Calu3 (cell line): ENCODE measurements at regions of chr3 and their contacts with region 1.

Region 1: GRCh38 chr3:22887664-22888291 is 315.3 kb upstream of the UBE2E2 start:
- DNase-seq: peak; percentile 34
- H3K4me3 Mint-ChIP-seq: no peak overlapping the region
- H3K27ac Mint-ChIP-seq: no peak overlapping the region
- H3K4me1 Mint-ChIP-seq: no peaks in the 10 kb centered on the region
- H3K27me3 Mint-ChIP-seq: peaks cover 20% of the 10 kb centered on the region
- CTCF ChIP-seq: peak; percentile 29

Region 2: GRCh38 chr3:22089284-22089683 is 798.5 kb before region 1 on chr3:
- CTCF ChIA-PET with region 1: no interaction called
- intact Hi-C with region 1: loop called (anchors 2 kb)
- DNase-seq: peak; percentile 49
- H3K4me3 Mint-ChIP-seq: no peak overlapping the region
- H3K27ac Mint-ChIP-seq: no peak overlapping the region
- H3K4me1 Mint-ChIP-seq: no peaks in the 10 kb centered on the region
- H3K27me3 Mint-ChIP-seq: no peaks in the 10 kb centered on the region
- CTCF ChIP-seq: peak; percentile 32

Region 3: DNA sequence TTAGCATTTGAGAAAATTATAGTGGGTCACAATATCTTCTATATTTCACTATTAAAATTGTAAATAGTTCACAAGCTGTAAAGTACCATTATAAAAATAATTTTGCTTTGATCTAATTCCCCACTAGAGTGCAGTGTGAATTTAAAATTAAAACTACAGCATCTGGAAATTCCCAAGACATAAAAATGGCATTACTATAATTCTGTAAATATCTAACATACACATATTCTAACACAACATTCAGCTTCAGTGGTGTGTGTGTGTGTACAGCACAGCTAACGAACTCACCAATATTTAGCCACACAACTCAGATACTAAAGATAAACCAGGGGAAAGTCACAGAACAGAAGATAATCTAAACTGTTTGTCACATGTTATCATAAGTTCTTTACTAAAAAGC is 711.8 kb before region 1 on chr3:
- CTCF ChIA-PET with region 1: no interaction called
- intact Hi-C with region 1: loop called (anchors 5 kb)
- DNase-seq: no peak
- H3K4me3 Mint-ChIP-seq: no peak overlapping the region
- H3K27ac Mint-ChIP-seq: no peak overlapping the region
- H3K4me1 Mint-ChIP-seq: no peaks in the 10 kb centered on the region
- H3K27me3 Mint-ChIP-seq: no peaks in the 10 kb centered on the region
- CTCF ChIP-seq: no peak

Region 4: DNA sequence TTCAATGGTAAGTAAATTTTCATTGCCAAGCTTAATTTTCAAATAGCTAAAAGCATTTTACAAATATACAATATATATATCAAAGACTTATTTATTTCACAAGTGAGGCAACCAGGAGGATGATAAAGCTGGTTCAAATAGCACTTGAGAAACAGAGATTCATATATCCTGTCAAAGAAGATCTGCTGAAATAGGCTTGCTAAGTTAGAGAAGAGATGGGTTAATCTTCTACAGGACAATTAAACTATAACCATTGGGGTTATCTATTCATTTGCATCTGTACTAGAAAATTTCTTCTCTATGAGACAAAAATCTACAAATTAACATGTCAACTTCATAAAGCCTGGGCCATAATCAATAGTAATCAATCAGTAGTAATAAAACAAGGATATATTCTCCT is 322.4 kb before region 1 on chr3:
- CTCF ChIA-PET with region 1: no interaction called
- intact Hi-C with region 1: loop called (anchors 1 kb)
- DNase-seq: no peak
- H3K4me3 Mint-ChIP-seq: no peak overlapping the region
- H3K27ac Mint-ChIP-seq: no peak overlapping the region
- H3K4me1 Mint-ChIP-seq: no peaks in the 10 kb centered on the region
- H3K27me3 Mint-ChIP-seq: no peaks in the 10 kb centered on the region
- CTCF ChIP-seq: no peak

Region 5: DNA sequence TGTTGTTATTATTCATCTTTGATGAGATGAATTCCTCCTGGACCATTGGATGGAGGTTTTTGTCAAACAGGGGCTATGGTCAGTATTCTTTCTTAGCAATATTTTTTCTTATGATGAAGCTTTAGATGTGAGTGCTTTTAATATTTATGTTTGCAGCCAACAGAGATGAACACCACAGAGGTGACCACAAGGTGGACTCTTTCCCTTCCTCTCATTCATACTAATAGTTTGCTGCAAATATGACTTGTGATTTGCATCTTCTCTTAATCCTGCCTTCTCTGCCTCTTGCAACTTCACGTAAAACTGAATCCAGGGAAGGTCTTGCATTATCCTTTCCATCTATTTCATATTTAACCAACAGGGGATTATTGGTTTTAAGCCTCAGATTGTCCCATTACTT is 157.8 kb before region 1 on chr3:
- CTCF ChIA-PET with region 1: no interaction called
- intact Hi-C with region 1: loop called (anchors 1 kb)
- DNase-seq: peak; percentile 4
- H3K4me3 Mint-ChIP-seq: no peak overlapping the region
- H3K27ac Mint-ChIP-seq: no peak overlapping the region
- H3K4me1 Mint-ChIP-seq: peaks cover 17% of the 10 kb centered on the region
- H3K27me3 Mint-ChIP-seq: no peaks in the 10 kb centered on the region
- CTCF ChIP-seq: no peak